Transverse colon (tissue), 4 donors: ENCODE measurements at regions of chr6 and their contacts with region 1.

Region 1: GRCh38 chr6:132483779-132484679 is 28.9 kb downstream of the STX7 start:
- DNase-seq: peak; percentile 13
- H3K4me3 ChIP-seq: no peak overlapping the region
- H3K27ac ChIP-seq: no peak overlapping the region
- H3K4me1 ChIP-seq: peaks cover 0 to 20% (median 6%) of the 10 kb centered on the region in 4 donors
- H3K27me3 ChIP-seq: no peaks in the 10 kb centered on the region
- CTCF ChIP-seq: peak; percentile 64 to 79 (median 69)
- EP300 ChIP-seq: no peak
- POLR2A ChIP-seq: no peak

Region 2: GRCh38 chr6:132041706-132042105 is 442.3 kb before region 1 on chr6:
- in situ Hi-C with region 1: no loop called
- intact Hi-C with region 1: no loop called
- DNase-seq: no peak
- H3K4me3 ChIP-seq: no peak overlapping the region
- H3K27ac ChIP-seq: no peak overlapping the region
- H3K4me1 ChIP-seq: no peaks in the 10 kb centered on the region
- H3K27me3 ChIP-seq: no peaks in the 10 kb centered on the region
- CTCF ChIP-seq: no peak
- EP300 ChIP-seq: no peak
- POLR2A ChIP-seq: no peak

Region 3: DNA sequence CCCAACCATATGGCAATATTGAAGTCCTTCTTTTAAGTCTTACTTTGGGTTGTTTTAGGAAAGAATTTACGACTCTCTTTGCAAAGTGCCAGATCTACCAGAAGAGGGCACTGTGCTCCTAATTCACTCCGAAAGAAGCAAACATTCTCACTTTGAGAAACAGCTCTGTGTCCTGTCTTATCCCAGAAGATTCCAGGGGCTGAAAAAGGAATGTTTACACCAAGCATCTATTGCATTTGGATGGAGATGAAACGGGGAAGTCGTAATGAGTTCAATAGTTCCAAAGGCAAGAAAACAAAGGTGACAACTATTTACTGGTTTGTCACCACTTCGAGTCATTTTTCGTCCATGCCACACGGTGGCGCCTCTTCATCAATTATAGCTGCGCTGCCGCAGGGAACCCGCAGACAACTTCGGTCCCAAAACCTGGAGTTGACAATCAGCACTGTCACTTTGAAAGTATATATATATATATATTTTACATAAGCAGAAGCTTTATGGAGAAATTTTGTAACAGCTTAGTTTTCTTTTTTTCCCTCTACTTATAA is 204.4 kb before region 1 on chr6:
- in situ Hi-C with region 1: loop called in 2 of 4 experiments (anchors 10 kb)
- intact Hi-C with region 1: loop called (anchors 10 kb)
- DNase-seq: peak; percentile 77
- H3K4me3 ChIP-seq: peak overlapping the region in 3 of 4 donors; percentile 22 to 49 (median 29)
- H3K27ac ChIP-seq: peak overlapping the region in 1 of 4 donors; percentile 36
- H3K4me1 ChIP-seq: peaks cover 0 to under 1% (median 0%) of the 10 kb centered on the region in 4 donors
- H3K27me3 ChIP-seq: peaks cover 3% of the 10 kb centered on the region
- CTCF ChIP-seq: peak; percentile 82 to 96 (median 94)
- EP300 ChIP-seq: no peak
- POLR2A ChIP-seq: no peak

Region 4: DNA sequence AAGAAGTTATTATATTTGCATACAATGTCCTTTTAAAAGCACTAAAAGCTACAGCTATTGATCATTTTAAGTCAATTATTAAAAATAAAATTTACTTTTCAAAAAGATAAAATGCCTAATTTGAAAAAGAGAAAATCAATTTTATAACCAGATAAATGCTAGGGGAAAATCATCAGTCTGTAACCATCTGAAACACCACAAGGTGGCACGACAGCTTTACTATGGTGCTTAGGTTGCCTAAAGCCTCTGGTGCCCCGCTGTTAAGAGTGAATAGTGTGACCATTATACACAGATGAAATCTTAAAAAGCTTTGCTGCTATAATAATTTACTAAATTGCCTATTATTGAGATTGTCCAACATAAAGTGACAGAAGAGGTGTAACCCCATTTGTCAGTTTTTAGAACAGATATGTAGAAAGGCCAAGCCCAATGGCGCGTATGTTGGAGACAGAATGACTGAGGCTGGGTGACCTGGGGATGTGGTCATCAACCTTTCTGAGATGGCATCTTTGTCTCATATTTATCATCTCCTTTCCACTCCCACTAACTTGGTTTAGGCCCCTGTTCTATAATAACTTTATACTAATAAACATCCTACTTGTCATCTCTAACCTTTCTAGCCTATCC is 183.6 kb before region 1 on chr6:
- in situ Hi-C with region 1: loop called in 3 of 4 experiments (anchors 10 kb)
- intact Hi-C with region 1: no loop called
- DNase-seq: peak; percentile 19
- H3K4me3 ChIP-seq: no peak overlapping the region
- H3K27ac ChIP-seq: no peak overlapping the region
- H3K4me1 ChIP-seq: no peaks in the 10 kb centered on the region
- H3K27me3 ChIP-seq: no peaks in the 10 kb centered on the region
- CTCF ChIP-seq: peak; percentile 34 to 52 (median 47)
- EP300 ChIP-seq: no peak
- POLR2A ChIP-seq: no peak